Activated T-helper 1 cell treated with anti-CD3 and anti-CD28 coated beads, Interleukin-12 subunit alpha, Interleukin-12 subunit beta, Interleukin-2, Interleukin-4 antibody, amounts not matched to agents 30 ng/mL and 10 ng/mL and 1 ng/mL, durations not matched to agents 14 hours and 24 hours and 36 hours (primary cell): ENCODE measurements at regions of chr10 and their contacts with region 1.

Region 1: DNA sequence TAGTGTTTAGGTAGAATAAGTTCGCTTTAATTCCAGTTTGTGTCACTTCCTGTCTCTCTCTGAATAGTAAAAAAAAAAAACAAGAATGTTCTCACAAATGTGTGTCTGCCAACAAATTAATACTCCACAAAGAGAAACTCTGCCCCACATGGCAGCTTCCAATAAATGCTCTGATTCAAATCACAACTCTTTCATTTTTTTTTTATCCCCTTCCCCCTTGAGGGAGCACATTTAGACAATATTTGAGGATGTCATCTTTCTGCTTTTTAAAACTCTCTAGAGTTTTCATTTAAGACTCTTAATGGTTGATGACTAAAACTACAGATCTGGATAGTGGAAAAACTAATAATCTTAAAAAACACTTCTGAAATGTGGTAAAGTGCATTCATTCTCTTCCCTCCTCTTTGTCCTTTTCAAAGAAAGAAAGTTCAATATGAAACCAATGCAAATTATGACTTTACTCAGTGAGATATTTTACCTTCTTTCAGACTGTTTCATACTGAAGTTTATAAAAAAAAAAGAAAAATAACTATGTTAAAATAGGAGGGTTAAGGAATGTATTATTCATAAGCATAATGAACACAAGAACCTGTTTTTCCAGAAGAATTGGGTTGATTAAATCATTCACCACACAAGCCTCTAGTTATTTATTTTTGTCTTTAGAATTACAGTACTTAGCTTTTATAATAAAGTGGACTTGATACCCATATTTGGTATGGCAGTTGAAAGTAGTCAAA is 42.3 kb downstream of the ARID5B start:
- DNase-seq: no peak
- H3K4me3 Mint-ChIP-seq: peak overlapping the region; percentile 77
- H3K27ac Mint-ChIP-seq: peak overlapping the region; percentile 95
- H3K4me1 Mint-ChIP-seq: peaks cover 58% of the 10 kb centered on the region
- H3K27me3 Mint-ChIP-seq: no peaks in the 10 kb centered on the region

Region 2: GRCh38 chr10:61750929-61751471 is 192.8 kb before region 1 on chr10:
- intact Hi-C with region 1: loop called (anchors 2 kb)
- DNase-seq: peak; percentile 53
- H3K4me3 Mint-ChIP-seq: no peak overlapping the region
- H3K27ac Mint-ChIP-seq: peak overlapping the region; percentile 35
- H3K4me1 Mint-ChIP-seq: peaks cover 23% of the 10 kb centered on the region
- H3K27me3 Mint-ChIP-seq: no peaks in the 10 kb centered on the region

Region 3: GRCh38 chr10:61961278-61961677 is 17.4 kb after region 1 on chr10:
- intact Hi-C with region 1: loop called (anchors 1 kb)
- DNase-seq: peak; percentile 24
- H3K4me3 Mint-ChIP-seq: peak overlapping the region; percentile 21
- H3K27ac Mint-ChIP-seq: peak overlapping the region; percentile 71
- H3K4me1 Mint-ChIP-seq: peaks cover 86% of the 10 kb centered on the region
- H3K27me3 Mint-ChIP-seq: no peaks in the 10 kb centered on the region

Region 4: GRCh38 chr10:61987951-61988379 is 44.1 kb after region 1 on chr10:
- intact Hi-C with region 1: loop called (anchors 1 kb)
- DNase-seq: peak; percentile 33
- H3K4me3 Mint-ChIP-seq: peak overlapping the region; percentile 78
- H3K27ac Mint-ChIP-seq: peak overlapping the region; percentile 99
- H3K4me1 Mint-ChIP-seq: peaks cover 87% of the 10 kb centered on the region
- H3K27me3 Mint-ChIP-seq: no peaks in the 10 kb centered on the region

Region 5: DNA sequence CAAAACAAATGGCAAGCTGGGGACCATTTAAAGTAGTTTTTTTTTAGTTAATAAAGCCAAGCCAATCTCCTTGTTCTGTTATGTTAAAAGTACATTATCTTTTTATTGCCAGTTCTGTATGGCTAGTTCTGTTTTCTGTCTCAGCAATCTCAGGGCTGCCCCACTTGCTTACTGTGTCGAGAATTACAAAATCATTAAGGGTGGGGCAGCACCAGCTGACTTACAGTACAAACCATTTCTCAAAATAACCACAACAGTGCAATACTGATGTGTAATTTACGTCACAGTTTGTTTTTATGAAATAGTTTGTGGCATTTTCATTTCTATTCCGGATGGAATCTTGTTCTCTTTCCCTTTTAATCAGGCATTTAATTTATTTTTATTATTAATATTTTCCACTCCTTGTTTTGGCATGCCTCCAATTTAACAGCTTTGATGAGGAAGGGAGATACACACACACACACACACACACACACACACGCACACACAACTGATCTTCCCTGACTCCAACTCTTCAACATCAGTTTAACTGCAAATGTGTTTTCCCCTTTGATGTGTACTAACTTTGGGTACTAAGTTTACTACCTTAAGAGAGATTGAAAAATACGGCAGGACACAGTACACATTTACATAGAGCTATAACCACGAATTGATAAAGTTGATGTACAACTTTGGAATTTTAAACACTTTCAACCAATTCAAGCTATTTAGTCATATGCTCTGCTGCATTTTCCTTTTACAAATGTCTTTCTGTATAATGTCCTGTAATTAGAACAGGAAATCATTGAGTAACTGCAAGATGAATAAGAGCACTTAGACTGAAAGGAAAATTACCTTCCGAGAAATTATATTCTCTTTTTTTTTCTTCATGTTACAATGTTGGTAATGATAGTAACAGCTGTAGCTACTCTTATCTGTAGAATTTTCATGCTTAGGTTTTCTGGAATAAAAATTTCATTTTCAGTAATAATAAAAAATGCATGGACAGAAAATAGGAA is 49.1 kb after region 1 on chr10:
- intact Hi-C with region 1: loop called (anchors 1 kb)
- DNase-seq: peak; percentile 69
- H3K4me3 Mint-ChIP-seq: peak overlapping the region; percentile 76
- H3K27ac Mint-ChIP-seq: peak overlapping the region; percentile 90
- H3K4me1 Mint-ChIP-seq: peaks cover 86% of the 10 kb centered on the region
- H3K27me3 Mint-ChIP-seq: no peaks in the 10 kb centered on the region

Region 6: DNA sequence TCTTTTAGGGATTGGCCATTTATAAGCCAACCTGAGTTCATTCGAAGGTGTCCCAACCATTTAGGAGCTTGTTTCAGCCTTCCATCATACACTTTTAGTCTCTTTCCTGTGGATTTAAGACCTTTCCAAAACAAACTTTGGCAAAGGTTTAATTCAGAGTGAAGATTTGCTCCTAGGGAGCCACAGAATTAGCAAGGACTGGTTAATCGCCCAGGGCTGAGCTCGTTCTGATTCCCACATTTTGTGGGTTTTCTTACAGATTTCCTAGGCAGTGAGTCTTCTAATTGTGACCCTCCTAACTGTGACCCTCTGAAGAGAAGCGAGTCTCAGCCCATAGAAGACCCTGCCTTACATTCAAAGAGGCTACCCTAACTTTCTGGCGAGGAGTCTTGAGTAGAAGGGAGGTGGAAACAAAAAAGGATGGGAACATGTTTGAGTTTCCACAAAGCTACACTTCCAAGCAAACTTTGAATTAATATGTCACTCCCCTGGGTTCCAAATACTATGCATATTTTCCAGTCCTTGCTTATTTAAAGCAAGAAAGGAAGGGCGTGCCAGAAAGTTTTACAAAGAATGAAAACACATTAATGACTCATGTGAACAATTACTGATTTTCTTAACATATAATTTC is 76.0 kb after region 1 on chr10:
- intact Hi-C with region 1: loop called (anchors 1 kb)
- DNase-seq: no peak
- H3K4me3 Mint-ChIP-seq: peak overlapping the region; percentile 61
- H3K27ac Mint-ChIP-seq: peak overlapping the region; percentile 94
- H3K4me1 Mint-ChIP-seq: peaks cover 66% of the 10 kb centered on the region
- H3K27me3 Mint-ChIP-seq: no peaks in the 10 kb centered on the region